CD4-positive, alpha-beta T cell (primary cell): ENCODE measurements at regions of chr2 and their contacts with region 1.

Region 1: GRCh38 chr2:64750817-64751285 is 97.1 kb upstream of the SERTAD2 start:
- DNase-seq: peak; percentile 92 to 100 (median 96)
- ATAC-seq: peak; percentile 83
- H3K4me3 ChIP-seq: peak overlapping the region; percentile 96
- H3K4me3 Mint-ChIP-seq: peak overlapping the region; percentile 95
- H3K27ac ChIP-seq: peak overlapping the region; percentile 81 to 91
- H3K27ac Mint-ChIP-seq: peak overlapping the region; percentile 92
- H3K4me1 ChIP-seq: peaks cover 16% of the 10 kb centered on the region
- H3K4me1 Mint-ChIP-seq: peaks cover 34% of the 10 kb centered on the region
- H3K27me3 ChIP-seq: no peaks in the 10 kb centered on the region
- H3K27me3 Mint-ChIP-seq: no peaks in the 10 kb centered on the region
- CTCF ChIP-seq: no peak

Region 2: GRCh38 chr2:64666810-64667438 is 83.9 kb before region 1 on chr2:
- CTCF ChIA-PET with region 1: interaction called, 3 read pairs
- POLR2A ChIA-PET with region 1: interaction called, 77 read pairs
- intact Hi-C with region 1: no loop called
- DNase-seq: peak in 1 of 14 experiments; percentile 40
- ATAC-seq: peak; percentile 73
- H3K4me3 ChIP-seq: no peak overlapping the region
- H3K4me3 Mint-ChIP-seq: peak overlapping the region; percentile 60
- H3K27ac ChIP-seq: peak overlapping the region; percentile 43 to 51
- H3K27ac Mint-ChIP-seq: no peak overlapping the region
- H3K4me1 ChIP-seq: peaks cover 37% of the 10 kb centered on the region
- H3K4me1 Mint-ChIP-seq: peaks cover 32% of the 10 kb centered on the region
- H3K27me3 ChIP-seq: no peaks in the 10 kb centered on the region
- H3K27me3 Mint-ChIP-seq: no peaks in the 10 kb centered on the region
- CTCF ChIP-seq: no peak

Region 3: DNA sequence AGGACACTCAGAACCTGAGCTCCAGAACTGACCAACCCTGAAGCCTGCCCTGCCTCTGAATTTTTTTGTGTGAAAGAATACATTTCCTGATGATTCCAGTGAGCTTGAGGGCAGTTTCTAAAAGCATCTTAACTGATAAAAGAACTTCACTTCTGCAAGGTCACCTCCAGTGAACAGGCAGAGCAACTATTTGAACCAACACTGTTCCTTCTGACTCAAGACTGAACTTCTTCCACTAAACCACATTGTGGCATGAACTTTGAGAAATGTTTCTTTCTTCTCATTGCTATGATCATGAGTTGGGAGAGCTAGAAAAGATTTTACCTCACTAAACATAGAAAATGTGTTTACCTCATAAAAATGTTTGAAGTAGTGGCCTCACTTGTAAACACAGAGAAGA is 13.3 kb before region 1 on chr2:
- CTCF ChIA-PET with region 1: interaction called, 3 read pairs
- POLR2A ChIA-PET with region 1: interaction called, 98 read pairs
- intact Hi-C with region 1: no loop called
- DNase-seq: no peak
- ATAC-seq: no peak
- H3K4me3 ChIP-seq: no peak overlapping the region
- H3K4me3 Mint-ChIP-seq: no peak overlapping the region
- H3K27ac ChIP-seq: no peak overlapping the region
- H3K27ac Mint-ChIP-seq: no peak overlapping the region
- H3K4me1 ChIP-seq: no peaks in the 10 kb centered on the region
- H3K4me1 Mint-ChIP-seq: peaks cover 24% of the 10 kb centered on the region
- H3K27me3 ChIP-seq: no peaks in the 10 kb centered on the region
- H3K27me3 Mint-ChIP-seq: no peaks in the 10 kb centered on the region
- CTCF ChIP-seq: no peak

Region 4: DNA sequence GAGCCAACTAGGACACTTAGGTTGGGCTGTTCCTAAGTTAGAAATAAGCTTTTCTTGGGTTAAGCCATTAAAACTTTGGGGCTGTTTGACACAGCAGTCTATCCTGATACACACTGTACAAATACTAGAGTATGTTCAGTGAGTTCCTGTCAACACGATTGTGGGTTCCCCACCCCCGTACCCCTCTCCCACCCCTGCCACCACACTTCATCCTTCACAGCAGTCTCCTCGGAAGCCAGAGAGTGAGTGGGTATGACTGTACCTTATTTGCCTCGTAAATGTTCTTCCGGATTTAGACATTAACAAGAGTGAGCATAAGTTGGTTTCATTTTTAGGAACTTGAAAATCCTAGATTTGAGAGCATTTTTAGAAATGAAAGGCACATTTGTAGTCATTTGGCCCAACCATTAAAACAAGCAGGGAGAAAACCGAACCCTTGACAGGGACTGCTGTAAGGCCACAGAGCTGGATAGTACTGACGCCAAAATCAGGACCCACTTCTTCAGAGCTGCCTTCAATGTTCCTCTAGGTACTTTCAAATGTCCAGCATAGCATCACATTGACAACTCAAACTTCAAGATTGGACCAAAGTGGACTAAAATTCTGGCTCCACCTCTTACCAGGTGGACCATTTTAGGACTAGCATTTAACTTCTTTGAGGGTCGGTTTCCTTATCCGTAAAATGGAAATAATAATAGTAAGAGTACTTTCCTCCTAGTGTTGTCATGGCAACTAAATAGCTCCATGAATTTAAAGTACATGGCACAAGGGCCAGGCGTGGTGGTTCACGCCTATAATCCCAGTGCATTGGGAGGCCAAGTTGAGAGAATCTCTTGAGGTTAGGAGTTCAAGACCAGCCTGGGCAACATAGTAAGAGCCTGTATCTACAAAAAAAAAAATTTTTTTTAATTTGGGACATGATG is 69.2 kb after region 1 on chr2:
- CTCF ChIA-PET with region 1: interaction called, 3 read pairs
- POLR2A ChIA-PET with region 1: interaction called, 30 read pairs
- intact Hi-C with region 1: loop called in 1 of 2 experiments (anchors 2 kb)
- DNase-seq: peak; percentile 6 to 84 (median 53)
- ATAC-seq: peak; percentile 97
- H3K4me3 ChIP-seq: peak overlapping the region; percentile 27
- H3K4me3 Mint-ChIP-seq: peak overlapping the region; percentile 63
- H3K27ac ChIP-seq: peak overlapping the region; percentile 53 to 76
- H3K27ac Mint-ChIP-seq: peak overlapping the region; percentile 86
- H3K4me1 ChIP-seq: peaks cover 19% of the 10 kb centered on the region
- H3K4me1 Mint-ChIP-seq: peaks cover 34% of the 10 kb centered on the region
- H3K27me3 ChIP-seq: no peaks in the 10 kb centered on the region
- H3K27me3 Mint-ChIP-seq: no peaks in the 10 kb centered on the region
- CTCF ChIP-seq: no peak

Region 5: DNA sequence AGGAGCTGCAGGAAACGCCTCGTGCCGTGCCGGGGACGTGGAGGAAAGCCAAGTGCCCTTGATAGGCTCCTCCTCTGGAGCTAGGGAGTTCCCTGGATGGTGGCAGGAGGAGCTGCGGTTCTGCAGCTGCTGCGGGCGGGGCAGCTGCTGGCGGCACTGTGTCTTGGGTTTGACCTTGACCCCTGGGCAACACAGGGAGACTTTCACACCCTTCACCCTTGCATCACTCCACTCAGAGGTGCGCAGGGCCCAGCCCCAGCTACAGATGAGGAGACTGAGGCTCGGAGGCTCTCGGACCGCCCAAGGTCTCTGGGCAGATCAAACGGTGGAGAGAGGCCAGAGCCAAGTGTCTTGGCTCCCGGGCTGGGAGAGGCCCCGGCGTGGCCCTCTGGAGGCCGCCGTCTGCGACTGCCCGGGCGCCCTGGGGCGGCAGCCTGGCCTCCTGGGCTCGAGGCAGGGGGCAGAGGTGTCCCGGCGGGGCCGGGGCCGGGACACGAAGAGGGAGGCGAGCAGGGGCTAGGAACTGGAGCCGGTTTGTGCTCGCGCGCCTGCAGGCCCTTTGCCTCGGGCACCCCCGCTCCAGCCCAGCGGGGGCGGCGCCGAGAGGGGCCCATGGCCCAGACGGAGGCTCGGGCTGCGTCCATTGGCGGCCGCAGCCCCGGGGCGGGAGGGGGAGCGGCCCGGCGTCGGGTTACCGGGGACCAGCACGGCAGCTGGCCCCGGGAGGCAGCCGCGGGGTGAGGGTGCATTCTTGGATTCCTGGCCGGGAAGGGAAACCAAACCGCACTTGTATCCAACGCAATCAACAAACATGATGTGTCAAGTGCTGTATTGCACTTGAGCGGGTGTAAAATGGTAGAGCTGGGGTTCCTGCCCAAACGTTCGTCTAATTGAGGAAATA is 108.7 kb after region 1 on chr2:
- CTCF ChIA-PET with region 1: no interaction called
- POLR2A ChIA-PET with region 1: no interaction called
- intact Hi-C with region 1: loop called in 1 of 2 experiments (anchors 5 kb)
- DNase-seq: peak in 2 of 14 experiments; percentile 56 to 59
- ATAC-seq: peak; percentile 21
- H3K4me3 ChIP-seq: no peak overlapping the region
- H3K4me3 Mint-ChIP-seq: no peak overlapping the region
- H3K27ac ChIP-seq: no peak overlapping the region
- H3K27ac Mint-ChIP-seq: no peak overlapping the region
- H3K4me1 ChIP-seq: peaks cover 15% of the 10 kb centered on the region
- H3K4me1 Mint-ChIP-seq: peaks cover 5% of the 10 kb centered on the region
- H3K27me3 ChIP-seq: peaks cover 0 to 16% of the 10 kb centered on the region in 2 experiments
- H3K27me3 Mint-ChIP-seq: peaks cover 16% of the 10 kb centered on the region
- CTCF ChIP-seq: no peak